Calu3 (cell line): ENCODE measurements at regions of chr14 and their contacts with region 1.

Region 1: GRCh38 chr14:22570132-22570949 is 18.7 kb downstream of the DAD1 start:
- DNase-seq: peak; percentile 77
- H3K4me3 Mint-ChIP-seq: no peak overlapping the region
- H3K27ac Mint-ChIP-seq: peak overlapping the region; percentile 30
- H3K4me1 Mint-ChIP-seq: peaks cover 28% of the 10 kb centered on the region
- H3K27me3 Mint-ChIP-seq: no peaks in the 10 kb centered on the region
- CTCF ChIP-seq: peak; percentile 79

Region 2: GRCh38 chr14:22472935-22473854 is 97.1 kb before region 1 on chr14:
- CTCF ChIA-PET with region 1: no interaction called
- intact Hi-C with region 1: no loop called
- DNase-seq: peak; percentile 42
- H3K4me3 Mint-ChIP-seq: no peak overlapping the region
- H3K27ac Mint-ChIP-seq: no peak overlapping the region
- H3K4me1 Mint-ChIP-seq: peaks cover 17% of the 10 kb centered on the region
- H3K27me3 Mint-ChIP-seq: no peaks in the 10 kb centered on the region
- CTCF ChIP-seq: peak; percentile 15

Region 3: DNA sequence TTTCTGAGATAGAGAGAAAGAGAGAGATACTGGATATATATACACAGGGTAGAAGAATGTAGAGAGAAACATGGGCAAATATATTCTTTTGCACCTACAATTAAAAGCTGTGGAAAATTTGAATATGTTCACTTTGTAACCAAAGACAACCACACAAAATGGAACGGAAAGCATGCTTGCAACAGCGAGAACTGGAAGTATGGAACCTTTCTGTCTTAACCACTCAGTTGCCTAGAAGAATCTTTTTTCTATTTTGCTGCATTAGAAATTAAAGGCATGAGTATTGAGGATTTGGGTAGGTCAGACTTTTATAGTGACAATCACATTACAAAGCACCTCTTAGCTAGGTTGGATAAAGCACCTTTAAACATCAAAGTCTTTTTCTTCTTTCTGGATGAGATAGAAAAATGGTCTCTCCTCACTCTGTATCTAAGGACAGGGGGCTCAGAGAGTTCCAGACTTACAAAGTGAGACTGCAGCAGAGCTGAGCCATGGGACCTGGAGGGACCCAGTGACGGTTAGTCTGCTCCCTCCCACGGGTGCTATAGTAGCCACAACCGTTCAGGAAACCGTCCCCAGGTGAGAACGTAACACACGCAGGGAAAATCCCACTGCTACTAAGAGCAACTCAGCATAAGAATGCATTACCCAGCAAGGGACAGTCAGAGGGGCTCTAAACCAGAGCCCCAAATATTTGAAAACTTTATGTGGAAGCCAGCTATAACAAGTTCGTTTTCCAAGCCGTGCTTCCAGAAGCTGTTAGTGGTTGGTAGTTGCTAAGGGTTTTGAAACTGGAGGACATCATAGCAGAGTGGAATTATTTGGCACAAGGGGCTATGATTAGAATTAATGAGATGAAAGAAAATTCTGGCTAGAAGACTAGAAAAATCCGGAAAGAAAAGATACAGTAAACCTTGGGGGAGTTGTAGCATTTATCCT is 78.4 kb before region 1 on chr14:
- CTCF ChIA-PET with region 1: no interaction called
- intact Hi-C with region 1: no loop called
- DNase-seq: no peak
- H3K4me3 Mint-ChIP-seq: no peak overlapping the region
- H3K27ac Mint-ChIP-seq: no peak overlapping the region
- H3K4me1 Mint-ChIP-seq: no peaks in the 10 kb centered on the region
- H3K27me3 Mint-ChIP-seq: peaks cover 82% of the 10 kb centered on the region
- CTCF ChIP-seq: no peak

Region 4: DNA sequence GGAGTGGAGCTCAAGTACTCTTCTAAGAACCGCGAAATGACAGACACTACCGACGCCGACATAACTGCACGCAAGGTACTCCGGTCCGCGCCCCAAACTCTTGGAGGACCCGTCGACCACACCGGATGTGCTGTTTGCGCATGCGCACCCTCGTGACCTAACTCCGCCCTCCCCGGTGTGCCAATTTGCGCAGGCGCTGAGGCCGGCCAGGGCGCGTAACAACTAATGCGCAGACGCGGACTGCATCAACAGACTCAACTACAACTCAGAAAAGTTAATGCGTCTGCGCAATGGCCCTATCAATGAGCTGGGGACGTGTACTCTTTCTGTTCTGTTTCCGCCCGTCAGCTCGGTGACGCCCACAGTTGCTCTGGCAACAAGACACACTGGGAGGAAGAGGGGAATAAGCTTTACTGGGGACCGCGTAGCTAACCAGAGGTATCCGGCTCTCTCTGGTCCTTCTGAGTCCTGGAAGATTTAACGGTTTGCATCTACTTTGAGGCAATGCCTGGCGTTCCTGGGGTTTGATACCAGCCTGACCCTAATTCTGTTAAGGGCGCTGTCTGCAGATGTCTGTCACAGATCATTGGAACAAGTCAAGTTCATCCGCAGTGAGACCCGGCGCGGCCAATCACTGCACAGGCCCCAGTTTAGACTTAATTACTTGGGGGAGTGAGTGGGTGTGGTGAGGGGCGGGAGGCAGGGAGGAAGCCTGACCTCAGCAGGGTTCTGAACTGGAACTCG is 18.9 kb after region 1 on chr14 and contains the start of gene DAD1:
- CTCF ChIA-PET with region 1: interaction called, 8 read pairs
- intact Hi-C with region 1: loop called (anchors 2 kb)
- DNase-seq: peak; percentile 97
- H3K4me3 Mint-ChIP-seq: peak within 1 kb of the TSS; percentile 87
- H3K27ac Mint-ChIP-seq: peak within 1 kb of the TSS; percentile 93
- H3K4me1 Mint-ChIP-seq: peaks cover 23% of the 10 kb centered on the region
- H3K27me3 Mint-ChIP-seq: peaks cover 16% of the 10 kb centered on the region
- CTCF ChIP-seq: peak; percentile 31
- total RNA-seq, gene DAD1: 196 and 197 TPM in 2 replicates

Region 5: GRCh38 chr14:22630486-22630885 is 60.1 kb after region 1 on chr14:
- CTCF ChIA-PET with region 1: no interaction called
- intact Hi-C with region 1: no loop called
- DNase-seq: no peak
- H3K4me3 Mint-ChIP-seq: no peak overlapping the region
- H3K27ac Mint-ChIP-seq: no peak overlapping the region
- H3K4me1 Mint-ChIP-seq: no peaks in the 10 kb centered on the region
- H3K27me3 Mint-ChIP-seq: peaks cover 33% of the 10 kb centered on the region
- CTCF ChIP-seq: no peak

Region 6: DNA sequence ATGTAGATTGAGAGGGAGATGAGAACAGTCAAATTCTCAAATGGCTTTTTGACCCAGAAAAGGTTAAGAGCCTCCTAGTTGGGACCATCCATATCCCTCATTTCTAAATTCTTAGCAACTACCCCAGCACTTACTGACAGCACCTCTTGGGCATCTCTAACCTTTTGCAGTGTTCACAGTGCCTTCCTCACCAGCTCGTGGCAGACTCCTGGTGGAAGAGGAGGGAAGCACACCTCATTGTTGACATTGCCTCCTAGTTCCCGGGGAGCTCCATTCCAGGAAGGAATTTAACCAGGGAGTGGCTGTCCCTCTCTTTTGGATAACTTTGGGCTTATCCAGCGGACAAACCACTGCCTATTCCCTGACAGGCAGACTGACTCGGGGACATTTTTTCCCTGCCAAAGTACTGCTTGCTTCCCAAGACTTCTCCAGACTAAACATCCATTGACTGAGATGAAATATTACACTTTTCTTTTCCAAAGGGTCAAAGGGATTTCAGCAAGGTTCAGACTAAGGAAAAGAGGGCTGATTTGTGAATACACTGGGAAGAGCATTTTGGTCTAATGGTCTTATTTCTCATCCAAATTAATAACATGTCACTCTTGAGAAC is 82.8 kb after region 1 on chr14:
- CTCF ChIA-PET with region 1: interaction called, 32 read pairs
- intact Hi-C with region 1: loop called (anchors 1 kb)
- DNase-seq: peak; percentile 80
- H3K4me3 Mint-ChIP-seq: no peak overlapping the region
- H3K27ac Mint-ChIP-seq: no peak overlapping the region
- H3K4me1 Mint-ChIP-seq: peaks cover 27% of the 10 kb centered on the region
- H3K27me3 Mint-ChIP-seq: no peaks in the 10 kb centered on the region
- CTCF ChIP-seq: peak; percentile 67

Region 7: DNA sequence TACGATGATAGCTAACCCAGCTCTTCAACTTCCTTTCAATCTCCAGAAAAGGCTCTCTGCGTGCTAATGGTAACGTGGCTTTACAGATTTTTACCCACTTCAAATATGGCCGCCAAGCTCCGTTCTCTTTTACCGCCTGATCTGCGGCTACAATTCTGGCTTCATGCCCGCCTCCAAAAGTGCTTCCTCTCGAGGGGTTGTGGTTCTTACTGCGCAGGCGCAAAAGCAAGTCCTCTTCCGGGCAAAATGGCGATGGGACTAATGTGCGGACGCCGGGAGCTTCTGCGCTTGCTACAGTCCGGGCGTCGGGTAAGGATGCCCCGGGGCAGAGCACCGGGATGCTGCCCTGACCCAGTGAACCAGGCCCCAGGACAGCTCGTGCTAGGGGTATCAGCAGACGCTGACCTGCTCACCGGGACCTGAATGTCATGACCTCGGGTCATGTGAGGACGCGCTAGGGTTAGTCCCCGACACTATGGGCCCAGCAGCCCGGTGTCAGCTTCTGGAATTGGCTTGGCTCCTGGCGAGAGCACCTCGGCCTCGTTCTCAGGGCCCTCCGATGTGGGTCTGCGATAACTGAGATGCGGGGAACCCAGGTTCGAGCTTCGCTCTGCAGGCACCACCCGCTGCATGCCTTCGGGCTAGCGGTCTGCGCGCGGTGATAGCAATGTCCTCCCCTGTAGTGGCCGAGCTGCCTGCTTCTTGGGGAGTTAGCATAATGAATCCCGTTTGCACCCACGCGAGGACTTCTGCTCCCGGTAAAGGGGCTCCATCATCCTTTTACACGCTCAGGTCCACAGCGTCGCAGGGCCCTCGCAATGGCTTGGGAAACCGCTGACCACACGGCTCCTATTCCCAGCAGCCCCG is 196.3 kb after region 1 on chr14 and contains the start of gene OXA1L:
- CTCF ChIA-PET with region 1: interaction called, 7 read pairs
- intact Hi-C with region 1: loop called (anchors 5 kb)
- DNase-seq: peak; percentile 93
- H3K4me3 Mint-ChIP-seq: peak within 1 kb of the TSS; percentile 82
- H3K27ac Mint-ChIP-seq: peak within 1 kb of the TSS; percentile 92
- H3K4me1 Mint-ChIP-seq: peaks cover 16% of the 10 kb centered on the region
- H3K27me3 Mint-ChIP-seq: no peaks in the 10 kb centered on the region
- CTCF ChIP-seq: no peak
- total RNA-seq, gene OXA1L: 76.5 and 83.3 TPM in 2 replicates